ENCODE measurements at regions of chr1 and their contacts with region 1.

Region 1: GRCh38 chr1:116570358-116571200 is at the start of gene CD58:
- DNase-seq: peak; percentile 95
- H3K4me3 Mint-ChIP-seq: peak within 1 kb of the TSS; percentile 95
- H3K27ac Mint-ChIP-seq: peak within 1 kb of the TSS; percentile 88
- H3K4me1 Mint-ChIP-seq: peaks cover 60% of the 10 kb centered on the region
- H3K27me3 Mint-ChIP-seq: no peaks in the 10 kb centered on the region
- total RNA-seq, gene CD58: 26.5 and 31.0 TPM in 2 replicates

Region 2: DNA sequence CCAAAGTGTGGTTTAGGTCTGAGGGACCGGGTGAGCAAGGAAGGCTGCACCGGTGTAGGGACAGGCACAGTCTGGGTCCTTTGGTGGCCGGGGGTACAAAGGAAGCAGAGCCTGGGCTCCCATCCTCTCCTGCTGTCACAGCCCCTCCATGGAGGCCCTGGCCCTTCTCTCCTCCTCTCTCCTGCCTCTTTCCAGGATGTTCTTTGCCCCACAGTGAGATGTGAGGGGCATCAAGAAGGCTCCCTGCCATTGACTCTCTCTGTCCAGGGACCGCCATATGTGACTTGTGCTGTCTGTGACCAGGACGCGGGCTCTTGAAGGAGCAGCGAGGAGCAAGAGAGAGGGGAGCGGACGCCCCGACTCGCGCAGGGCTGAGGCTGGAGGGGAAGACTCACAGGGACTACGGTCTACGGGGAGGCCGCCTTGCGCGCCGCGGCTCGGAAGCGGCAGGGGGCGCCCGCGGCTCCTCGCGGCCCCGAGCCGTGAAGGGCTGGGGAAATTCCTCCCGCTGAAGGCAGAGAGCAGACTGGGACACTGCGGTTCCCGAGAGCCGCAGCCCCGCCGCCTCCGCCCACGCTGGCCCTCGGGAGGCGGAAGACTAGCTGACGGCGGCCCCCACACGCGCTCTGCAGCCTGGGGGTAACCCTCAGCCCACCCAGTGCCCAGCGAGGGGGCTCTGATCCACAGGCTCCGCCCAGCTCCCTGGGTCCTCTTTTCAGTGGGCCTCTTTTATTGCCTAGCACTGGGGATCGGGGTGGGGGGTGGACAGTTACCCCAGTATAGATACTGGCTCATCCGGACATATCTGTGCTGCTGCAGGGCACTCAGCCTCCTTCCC is 418.6 kb before region 1 on chr1:
- intact Hi-C with region 1: loop called (anchors 5 kb)
- DNase-seq: peak; percentile 94
- H3K4me3 Mint-ChIP-seq: peak overlapping the region; percentile 77
- H3K27ac Mint-ChIP-seq: peak overlapping the region; percentile 74
- H3K4me1 Mint-ChIP-seq: peaks cover 13% of the 10 kb centered on the region
- H3K27me3 Mint-ChIP-seq: peaks cover 33% of the 10 kb centered on the region

Region 3: GRCh38 chr1:116504308-116505156 is 66.0 kb before region 1 on chr1:
- intact Hi-C with region 1: loop called (anchors 1 kb)
- DNase-seq: peak; percentile 96
- H3K4me3 Mint-ChIP-seq: peak overlapping the region; percentile 46
- H3K27ac Mint-ChIP-seq: peak overlapping the region; percentile 96
- H3K4me1 Mint-ChIP-seq: peaks cover 72% of the 10 kb centered on the region
- H3K27me3 Mint-ChIP-seq: no peaks in the 10 kb centered on the region

Region 4: GRCh38 chr1:116605315-116605714 is 34.7 kb after region 1 on chr1:
- intact Hi-C with region 1: no loop called
- DNase-seq: no peak
- H3K4me3 Mint-ChIP-seq: no peak overlapping the region
- H3K27ac Mint-ChIP-seq: no peak overlapping the region
- H3K4me1 Mint-ChIP-seq: peaks cover 14% of the 10 kb centered on the region
- H3K27me3 Mint-ChIP-seq: peaks cover 4% of the 10 kb centered on the region

Region 5: DNA sequence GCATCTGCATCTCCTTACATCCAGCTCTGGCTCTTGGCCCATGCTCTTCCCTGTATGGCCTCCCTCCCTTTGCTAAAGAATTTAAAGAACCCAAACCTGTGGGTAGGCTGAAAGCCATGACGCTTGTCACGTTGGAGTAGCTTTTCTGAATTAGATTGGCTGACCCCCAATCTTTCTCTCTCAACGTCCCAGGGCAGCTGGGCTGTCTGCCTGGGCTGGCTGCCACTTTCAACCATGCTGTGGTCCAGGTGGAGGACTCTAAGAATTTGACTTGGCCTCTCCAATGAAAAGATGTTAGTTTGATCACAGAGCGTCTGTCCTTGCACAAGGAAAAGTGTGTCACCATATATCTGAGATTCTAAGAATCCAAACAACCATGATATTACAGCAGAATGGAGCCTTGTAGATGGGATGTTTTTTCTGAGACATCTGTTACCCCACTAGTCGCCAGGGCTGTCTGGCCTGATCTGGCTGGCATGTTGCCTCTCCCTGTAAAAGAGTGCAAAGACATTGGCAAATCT is 103.5 kb after region 1 on chr1:
- intact Hi-C with region 1: loop called (anchors 5 kb)
- DNase-seq: no peak
- H3K4me3 Mint-ChIP-seq: no peak overlapping the region
- H3K27ac Mint-ChIP-seq: no peak overlapping the region
- H3K4me1 Mint-ChIP-seq: peaks cover 2% of the 10 kb centered on the region
- H3K27me3 Mint-ChIP-seq: peaks cover 53% of the 10 kb centered on the region

Region 6: GRCh38 chr1:116826818-116827606 is 256.4 kb after region 1 on chr1:
- intact Hi-C with region 1: loop called (anchors 5 kb)
- DNase-seq: peak; percentile 91
- H3K4me3 Mint-ChIP-seq: peak overlapping the region; percentile 76
- H3K27ac Mint-ChIP-seq: peak overlapping the region; percentile 93
- H3K4me1 Mint-ChIP-seq: peaks cover 59% of the 10 kb centered on the region
- H3K27me3 Mint-ChIP-seq: no peaks in the 10 kb centered on the region

Region 7: DNA sequence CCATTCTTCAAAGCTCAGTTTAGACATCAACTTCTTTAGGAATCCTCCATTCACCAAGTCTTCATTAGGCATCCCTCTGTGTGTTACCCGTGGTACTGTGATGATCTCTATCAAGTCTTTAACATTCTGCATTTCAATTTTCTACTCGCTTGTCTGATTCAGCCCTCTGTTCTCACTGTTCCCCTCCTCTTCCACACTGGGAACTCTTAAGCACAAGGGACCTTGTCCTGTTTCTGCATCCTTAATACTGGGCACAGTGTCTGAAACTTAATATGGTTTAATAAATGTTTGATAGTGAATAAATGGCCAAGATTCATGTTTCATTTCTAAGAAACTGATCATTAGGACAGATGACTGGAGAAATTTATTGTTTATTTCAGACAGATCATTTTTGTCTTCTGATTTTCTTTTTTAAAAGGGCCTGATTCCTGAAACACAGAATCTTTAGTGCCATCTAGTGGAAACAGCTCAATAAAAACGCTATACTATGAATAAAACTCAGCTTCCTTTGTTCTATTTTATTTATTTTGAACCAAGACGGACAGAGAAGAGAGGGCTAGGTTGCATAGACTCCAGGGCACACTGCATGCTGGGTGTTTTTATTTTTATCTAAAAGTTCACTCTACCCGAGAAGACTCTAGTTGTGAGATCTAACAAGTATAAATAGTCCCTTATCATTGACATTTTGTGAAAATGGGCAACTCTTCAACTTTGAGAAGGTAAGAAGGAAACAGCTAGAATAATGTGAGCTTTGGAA is 557.9 kb after region 1 on chr1:
- intact Hi-C with region 1: loop called (anchors 2 kb)
- DNase-seq: no peak
- H3K4me3 Mint-ChIP-seq: no peak overlapping the region
- H3K27ac Mint-ChIP-seq: no peak overlapping the region
- H3K4me1 Mint-ChIP-seq: no peaks in the 10 kb centered on the region
- H3K27me3 Mint-ChIP-seq: peaks cover 22% of the 10 kb centered on the region

Measured in activated CD4-positive, alpha-beta T cell treated with anti-CD3 and anti-CD28 coated beads, Interleukin-2, amount 10 ng/mL, durations not matched to agents 24 days and 14 days (primary cell).